ENCODE measurements at regions of chr15 and their contacts with region 1.

Region 1: GRCh38 chr15:29090617-29091466 is 178.8 kb downstream of the NSMCE3 start:
- DNase-seq: peak; percentile 80
- H3K4me3 Mint-ChIP-seq: peak overlapping the region; percentile 55
- H3K27ac Mint-ChIP-seq: no peak overlapping the region
- H3K4me1 Mint-ChIP-seq: peaks cover 10% of the 10 kb centered on the region
- H3K27me3 Mint-ChIP-seq: no peaks in the 10 kb centered on the region

Region 2: DNA sequence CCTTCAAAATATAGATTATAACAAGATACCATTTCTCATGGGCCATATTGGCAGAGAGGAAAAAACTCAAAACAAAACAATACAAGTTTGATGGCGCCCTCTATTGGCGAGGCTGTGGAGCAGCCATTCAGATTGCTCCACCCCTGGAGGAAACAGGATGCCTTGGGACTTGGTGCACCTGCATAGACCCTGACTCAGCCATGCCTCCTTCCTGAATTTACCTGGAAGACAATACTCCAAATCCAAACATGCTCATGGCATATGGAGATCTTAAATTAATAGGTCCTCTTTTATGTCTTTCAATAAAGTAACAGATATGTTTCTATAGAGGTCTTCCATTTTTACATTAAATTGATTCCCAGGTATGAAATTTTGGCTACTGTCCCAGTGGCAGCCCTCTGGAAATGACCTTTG is 115.1 kb before region 1 on chr15:
- intact Hi-C with region 1: loop called (anchors 5 kb)
- DNase-seq: peak; percentile 90
- H3K4me3 Mint-ChIP-seq: no peak overlapping the region
- H3K27ac Mint-ChIP-seq: no peak overlapping the region
- H3K4me1 Mint-ChIP-seq: no peaks in the 10 kb centered on the region
- H3K27me3 Mint-ChIP-seq: peaks cover 4% of the 10 kb centered on the region

Measured in activated CD4-positive, alpha-beta T cell treated with anti-CD3 and anti-CD28 coated beads, Interleukin-2, amount 10 ng/mL, durations not matched to agents 24 days and 14 days (primary cell).